B cell (primary cell): ENCODE measurements at regions of chr22 and their contacts with region 1.

Region 1: GRCh38 chr22:21938071-21938822 is 14.4 kb downstream of the PPM1F start:
- DNase-seq: peak; percentile 91
- ATAC-seq: peak; percentile 94
- H3K4me3 ChIP-seq: peak overlapping the region; percentile 44 to 68 (median 61)
- H3K4me3 Mint-ChIP-seq: peak overlapping the region; percentile 91
- H3K27ac ChIP-seq: peak overlapping the region; percentile 16 to 51
- H3K27ac Mint-ChIP-seq: peak overlapping the region; percentile 85
- H3K4me1 ChIP-seq: peaks cover 45 to 55% of the 10 kb centered on the region in 2 donors
- H3K4me1 Mint-ChIP-seq: peaks cover 50% of the 10 kb centered on the region
- H3K27me3 ChIP-seq: no peaks in the 10 kb centered on the region
- H3K27me3 Mint-ChIP-seq: no peaks in the 10 kb centered on the region
- CTCF ChIP-seq: peak; percentile 99

Region 2: GRCh38 chr22:21666786-21667185 is 271.5 kb before region 1 on chr22:
- CTCF ChIA-PET with region 1: interaction called, 9 read pairs
- POLR2A ChIA-PET with region 1: no interaction called
- intact Hi-C with region 1: loop called (anchors 5 kb)
- DNase-seq: no peak
- ATAC-seq: no peak
- H3K4me3 ChIP-seq: peak overlapping the region in 4 of 5 experiments; percentile 77 to 96 (median 90)
- H3K4me3 Mint-ChIP-seq: peak overlapping the region; percentile 96
- H3K27ac ChIP-seq: peak overlapping the region in 1 of 2 donors; percentile 92
- H3K27ac Mint-ChIP-seq: peak overlapping the region; percentile 69
- H3K4me1 ChIP-seq: peaks cover 8 to 17% of the 10 kb centered on the region in 2 donors
- H3K4me1 Mint-ChIP-seq: peaks cover 28% of the 10 kb centered on the region
- H3K27me3 ChIP-seq: no peaks in the 10 kb centered on the region
- H3K27me3 Mint-ChIP-seq: no peaks in the 10 kb centered on the region
- CTCF ChIP-seq: no peak

Region 3: GRCh38 chr22:21712894-21713712 is 225.1 kb before region 1 on chr22:
- CTCF ChIA-PET with region 1: interaction called, 52 read pairs
- POLR2A ChIA-PET with region 1: no interaction called
- intact Hi-C with region 1: loop called (anchors 1 kb)
- DNase-seq: peak; percentile 75
- ATAC-seq: peak; percentile 94
- H3K4me3 ChIP-seq: no peak overlapping the region
- H3K4me3 Mint-ChIP-seq: peak overlapping the region; percentile 49
- H3K27ac ChIP-seq: no peak overlapping the region
- H3K27ac Mint-ChIP-seq: peak overlapping the region; percentile 50
- H3K4me1 ChIP-seq: peaks cover 0 to 7% of the 10 kb centered on the region in 2 donors
- H3K4me1 Mint-ChIP-seq: peaks cover 8% of the 10 kb centered on the region
- H3K27me3 ChIP-seq: no peaks in the 10 kb centered on the region
- H3K27me3 Mint-ChIP-seq: no peaks in the 10 kb centered on the region
- CTCF ChIP-seq: peak; percentile 83

Region 4: DNA sequence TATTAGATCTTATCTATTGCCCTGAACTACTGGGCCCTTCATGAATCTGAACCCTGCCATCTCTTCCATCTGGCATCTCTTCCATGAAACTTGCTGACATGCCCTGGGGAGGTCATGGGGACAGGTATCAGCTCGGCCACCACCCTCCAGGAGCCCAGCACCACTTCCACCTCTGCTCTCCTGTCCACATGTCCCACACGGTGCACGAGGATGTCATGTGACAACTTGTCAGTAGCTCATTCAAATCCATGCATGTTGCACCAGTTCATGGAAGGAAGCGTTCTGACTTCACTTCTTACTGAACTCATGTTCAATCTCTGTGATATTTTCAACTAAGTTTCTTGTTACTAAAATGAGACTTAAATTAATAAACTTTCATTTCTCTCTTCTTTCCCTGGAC is 219.2 kb before region 1 on chr22:
- CTCF ChIA-PET with region 1: interaction called, 18 read pairs
- POLR2A ChIA-PET with region 1: interaction called, 4 read pairs
- intact Hi-C with region 1: no loop called
- DNase-seq: no peak
- ATAC-seq: no peak
- H3K4me3 ChIP-seq: peak overlapping the region in 1 of 5 experiments; percentile 2
- H3K4me3 Mint-ChIP-seq: peak overlapping the region; percentile 40
- H3K27ac ChIP-seq: peak overlapping the region in 1 of 2 donors; percentile 64
- H3K27ac Mint-ChIP-seq: peak overlapping the region; percentile 72
- H3K4me1 ChIP-seq: peaks cover 10 to 12% of the 10 kb centered on the region in 2 donors
- H3K4me1 Mint-ChIP-seq: peaks cover 17% of the 10 kb centered on the region
- H3K27me3 ChIP-seq: no peaks in the 10 kb centered on the region
- H3K27me3 Mint-ChIP-seq: no peaks in the 10 kb centered on the region
- CTCF ChIP-seq: no peak

Region 5: GRCh38 chr22:21867528-21868266 is 70.5 kb before region 1 on chr22 and contains the start of gene MAPK1:
- CTCF ChIA-PET with region 1: interaction called, 5 read pairs
- POLR2A ChIA-PET with region 1: no interaction called
- intact Hi-C with region 1: loop called (anchors 1 kb)
- DNase-seq: peak; percentile 98
- ATAC-seq: peak; percentile 90
- H3K4me3 ChIP-seq: peak within 1 kb of the TSS; percentile 64 to 93 (median 91)
- H3K4me3 Mint-ChIP-seq: peak within 1 kb of the TSS; percentile 94
- H3K27ac ChIP-seq: peak within 1 kb of the TSS; percentile 93 to 100
- H3K27ac Mint-ChIP-seq: peak within 1 kb of the TSS; percentile 93
- H3K4me1 ChIP-seq: peaks cover 39 to 40% of the 10 kb centered on the region in 2 donors
- H3K4me1 Mint-ChIP-seq: peaks cover 45% of the 10 kb centered on the region
- H3K27me3 ChIP-seq: no peaks in the 10 kb centered on the region
- H3K27me3 Mint-ChIP-seq: no peaks in the 10 kb centered on the region
- CTCF ChIP-seq: peak; percentile 39
- total RNA-seq, gene MAPK1: 145 and 155 TPM in 2 replicates

Region 6: DNA sequence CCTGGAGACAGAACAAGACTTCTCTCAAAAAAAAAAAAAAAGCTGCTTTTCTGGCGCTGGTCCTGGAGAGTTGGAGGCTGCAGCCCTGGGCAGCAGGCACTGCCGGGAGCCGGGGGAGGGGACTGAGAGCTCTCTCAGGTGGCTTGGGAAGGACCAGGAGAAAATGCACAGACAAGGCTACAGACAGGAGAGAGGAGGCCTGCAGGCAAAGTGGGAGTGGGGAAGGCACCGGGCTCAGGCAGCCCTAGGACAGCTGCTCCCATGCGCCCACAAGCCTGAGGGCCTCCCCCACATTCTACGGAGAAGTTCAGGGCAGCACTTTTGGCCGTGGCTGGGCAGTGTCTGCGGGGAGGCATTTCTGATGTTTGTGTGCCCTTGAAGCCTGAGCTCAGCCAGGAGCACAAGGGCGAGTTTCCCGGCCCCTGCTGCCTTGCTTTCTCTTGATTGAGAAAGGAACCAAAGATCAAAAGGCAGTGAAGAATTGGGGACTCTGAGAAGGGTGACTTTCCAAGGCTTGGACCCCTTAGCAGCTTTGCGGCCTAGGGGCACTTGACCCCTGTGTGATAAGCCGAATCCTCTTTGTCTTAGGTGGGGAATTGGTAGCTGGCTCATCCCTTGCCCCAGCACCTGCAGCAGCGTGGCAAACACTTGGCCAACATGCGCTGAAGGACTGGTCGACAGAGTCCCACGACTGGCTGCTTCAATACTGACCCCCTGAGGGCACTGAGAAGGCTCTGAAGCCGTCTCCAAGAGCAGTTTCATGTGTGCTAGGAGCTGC is 20.9 kb before region 1 on chr22:
- CTCF ChIA-PET with region 1: interaction called, 15 read pairs
- POLR2A ChIA-PET with region 1: no interaction called
- intact Hi-C with region 1: no loop called
- DNase-seq: no peak
- ATAC-seq: no peak
- H3K4me3 ChIP-seq: no peak overlapping the region
- H3K4me3 Mint-ChIP-seq: no peak overlapping the region
- H3K27ac ChIP-seq: no peak overlapping the region
- H3K27ac Mint-ChIP-seq: no peak overlapping the region
- H3K4me1 ChIP-seq: no peaks in the 10 kb centered on the region
- H3K4me1 Mint-ChIP-seq: peaks cover 2% of the 10 kb centered on the region
- H3K27me3 ChIP-seq: no peaks in the 10 kb centered on the region
- H3K27me3 Mint-ChIP-seq: no peaks in the 10 kb centered on the region
- CTCF ChIP-seq: no peak

Region 7: DNA sequence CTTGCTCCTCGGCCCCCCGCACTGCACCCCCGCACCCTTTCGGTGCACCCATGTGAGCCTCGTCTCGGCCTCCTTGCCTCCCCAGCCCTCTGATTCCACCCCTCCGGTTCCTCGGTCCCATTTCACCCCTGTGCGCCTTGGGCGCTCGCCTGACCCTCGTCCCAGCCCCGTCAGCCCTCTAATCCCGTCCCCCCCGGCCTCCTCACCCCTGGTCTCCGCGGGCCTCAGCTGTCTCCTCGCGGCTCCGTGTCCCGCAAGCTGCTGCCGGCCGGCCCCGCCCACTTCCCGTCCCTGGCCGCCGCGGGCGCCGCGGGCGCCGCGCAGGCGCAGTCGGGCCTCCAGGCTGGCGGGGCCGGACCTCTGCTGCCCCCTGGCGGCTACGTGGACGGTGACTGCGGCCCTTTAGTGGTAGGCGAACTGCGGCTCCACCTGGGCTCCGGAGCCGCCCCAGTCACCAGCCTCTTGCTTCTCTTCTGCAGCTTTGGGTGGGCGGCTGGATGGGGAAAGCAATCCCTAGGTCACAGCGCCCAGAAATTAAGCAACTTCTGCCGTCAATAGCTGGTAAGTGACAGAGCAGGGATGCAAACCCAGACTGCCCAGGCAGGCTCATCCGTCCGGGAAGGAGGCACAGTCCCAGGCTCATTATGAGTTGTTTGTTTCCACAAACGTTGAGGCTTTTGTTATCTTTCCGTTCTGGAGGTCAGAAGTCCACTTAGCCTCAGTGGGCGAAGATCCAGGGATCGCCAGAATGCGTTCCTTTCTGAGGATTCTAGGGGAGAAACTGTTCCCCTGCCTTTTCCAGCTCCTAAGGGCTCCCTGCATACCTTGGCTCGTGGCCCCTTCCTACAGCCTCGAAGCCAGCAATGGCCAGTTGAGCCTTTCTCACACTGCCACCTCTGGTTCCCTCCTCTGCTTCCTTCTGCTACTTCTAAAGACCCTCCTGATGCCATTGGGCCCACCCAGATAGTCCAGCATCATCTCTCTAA is 14.6 kb after region 1 on chr22 and contains the start of gene PPM1F:
- CTCF ChIA-PET with region 1: interaction called, 116 read pairs
- POLR2A ChIA-PET with region 1: interaction called, 12 read pairs
- intact Hi-C with region 1: loop called (anchors 2 kb)
- DNase-seq: peak; percentile 94
- ATAC-seq: peak; percentile 85
- H3K4me3 ChIP-seq: peak within 1 kb of the TSS; percentile 45 to 81 (median 74)
- H3K4me3 Mint-ChIP-seq: peak within 1 kb of the TSS; percentile 92
- H3K27ac ChIP-seq: peak within 1 kb of the TSS in 1 of 2 donors; percentile 53
- H3K27ac Mint-ChIP-seq: peak within 1 kb of the TSS; percentile 82
- H3K4me1 ChIP-seq: peaks cover 10 to 12% of the 10 kb centered on the region in 2 donors
- H3K4me1 Mint-ChIP-seq: peaks cover 19% of the 10 kb centered on the region
- H3K27me3 ChIP-seq: no peaks in the 10 kb centered on the region
- H3K27me3 Mint-ChIP-seq: no peaks in the 10 kb centered on the region
- CTCF ChIP-seq: peak; percentile 80
- total RNA-seq, gene PPM1F: 30.0 and 33.1 TPM in 2 replicates